ENCODE measurements at regions of chr17 and their contacts with region 1.

Region 1: DNA sequence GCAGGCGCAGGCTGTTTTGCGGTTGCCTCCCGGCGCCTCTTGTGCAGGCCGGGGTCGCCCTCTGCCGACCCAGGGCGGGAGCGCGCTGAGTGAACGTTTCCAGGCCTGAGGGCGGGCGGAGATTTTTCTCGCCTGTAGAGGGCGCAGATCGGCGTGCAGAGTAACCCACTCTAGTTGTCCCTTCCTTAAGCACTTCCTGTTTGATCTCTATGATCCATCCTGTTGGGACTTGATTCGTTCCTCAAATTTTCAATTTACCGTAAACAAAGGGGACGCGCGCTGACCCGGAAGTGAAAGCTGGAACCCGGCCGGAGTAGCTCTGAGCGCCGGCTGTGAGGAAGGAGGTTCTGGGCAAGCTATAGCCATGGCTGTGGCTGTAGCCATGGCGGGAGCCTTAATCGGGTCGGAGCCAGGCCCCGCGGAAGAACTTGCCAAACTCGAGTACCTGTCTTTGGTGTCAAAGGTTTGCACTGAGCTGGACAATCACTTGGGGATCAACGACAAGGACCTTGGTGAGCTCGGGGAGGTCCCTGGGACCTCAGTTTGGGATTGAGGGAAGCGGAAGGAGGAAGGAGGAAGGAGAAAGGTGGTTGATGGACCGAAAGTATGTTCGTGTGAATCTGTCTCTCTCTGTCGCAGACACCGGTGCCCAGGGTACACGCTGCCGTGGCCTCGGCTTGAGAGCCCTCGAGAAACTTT is at the start of gene DHX8:
- H3K4me3 Mint-ChIP-seq: peak within 1 kb of the TSS; percentile 100
- H3K27ac Mint-ChIP-seq: peak within 1 kb of the TSS; percentile 97
- H3K4me1 Mint-ChIP-seq: peaks cover 41% of the 10 kb centered on the region
- H3K27me3 Mint-ChIP-seq: no peaks in the 10 kb centered on the region

Region 2: DNA sequence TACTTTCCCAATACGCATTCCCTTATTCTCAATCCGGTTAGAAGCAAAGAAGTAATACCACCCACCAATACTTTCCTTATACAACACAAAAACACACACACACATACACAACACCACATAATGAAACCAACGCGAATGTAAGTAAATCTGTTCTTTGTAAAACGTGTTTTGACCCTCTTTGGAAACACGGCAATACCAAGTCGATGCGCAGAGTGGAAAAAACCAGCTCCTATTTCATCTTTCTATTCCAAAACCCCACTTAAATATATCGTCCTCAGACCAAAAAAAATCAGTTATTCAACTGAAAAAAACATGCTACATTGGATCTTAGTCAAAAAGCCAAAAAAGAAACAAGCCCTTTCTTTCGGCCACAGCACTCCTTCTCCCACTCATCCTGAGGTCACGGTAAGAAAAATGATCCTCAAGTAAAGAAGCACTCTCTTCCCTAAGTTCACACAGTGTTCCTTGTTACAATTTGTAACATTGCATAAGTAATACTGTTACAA is 116.0 kb before region 1 on chr17:
- intact Hi-C with region 1: loop called (anchors 1 kb)
- H3K4me3 Mint-ChIP-seq: peak overlapping the region; percentile 79
- H3K27ac Mint-ChIP-seq: peak overlapping the region; percentile 100
- H3K4me1 Mint-ChIP-seq: peaks cover 64% of the 10 kb centered on the region
- H3K27me3 Mint-ChIP-seq: no peaks in the 10 kb centered on the region

Region 3: DNA sequence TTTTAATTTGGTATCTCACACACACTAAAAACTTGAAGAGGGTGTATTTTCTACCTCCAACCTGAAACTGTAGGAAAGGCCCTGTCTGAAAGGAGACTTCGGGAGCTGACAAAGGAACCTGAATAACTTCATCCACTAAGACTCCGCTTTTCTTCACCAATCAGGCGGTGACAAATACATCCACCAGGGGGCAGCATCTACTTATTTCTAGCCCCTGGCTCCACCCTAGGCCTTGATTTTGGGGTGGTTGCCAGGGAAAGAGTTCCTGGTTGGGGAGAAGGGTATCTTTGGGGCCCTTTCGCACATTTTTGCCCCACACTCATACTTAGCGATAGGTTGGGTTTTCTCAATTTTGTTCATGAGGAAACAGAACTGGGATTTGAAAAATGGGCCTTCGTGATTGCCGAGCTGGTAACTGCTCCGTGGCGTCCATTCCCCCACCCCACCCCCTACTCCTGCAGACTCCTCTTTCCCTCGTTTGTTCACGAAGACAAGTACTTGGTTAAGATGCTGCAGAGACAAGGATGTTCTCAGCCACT is 89.8 kb before region 1 on chr17:
- intact Hi-C with region 1: loop called (anchors 1 kb)
- H3K4me3 Mint-ChIP-seq: no peak overlapping the region
- H3K27ac Mint-ChIP-seq: peak overlapping the region; percentile 94
- H3K4me1 Mint-ChIP-seq: peaks cover 67% of the 10 kb centered on the region
- H3K27me3 Mint-ChIP-seq: no peaks in the 10 kb centered on the region

Measured in dendritic cell treated with granulocyte-macrophage colony-stimulating factor and Interleukin-4, amounts not matched to agents 40 ng/mL and 50 ng/mL, for 4 days (primary cell).